Ovary (tissue), 10 donors: ENCODE measurements at regions of chr3 and their contacts with region 1.

Region 1: GRCh38 chr3:146334151-146334550 is 83.2 kb upstream of the PLSCR4 start:
- DNase-seq: peak; percentile 22 to 55 (median 44)
- H3K4me3 ChIP-seq: no peak overlapping the region
- H3K27ac ChIP-seq: no peak overlapping the region
- H3K4me1 ChIP-seq: no peaks in the 10 kb centered on the region
- H3K27me3 ChIP-seq: no peaks in the 10 kb centered on the region
- CTCF ChIP-seq: peak in 1 of 3 donors; percentile 9
- EP300 ChIP-seq: no peak
- POLR2A ChIP-seq: no peak

Region 2: GRCh38 chr3:146374146-146374545 is 40.0 kb after region 1 on chr3:
- intact Hi-C with region 1: no loop called
- DNase-seq: no peak
- H3K4me3 ChIP-seq: no peak overlapping the region
- H3K27ac ChIP-seq: peak overlapping the region in 1 of 2 donors; percentile 54
- H3K4me1 ChIP-seq: peaks cover 6% of the 10 kb centered on the region
- H3K27me3 ChIP-seq: no peaks in the 10 kb centered on the region
- CTCF ChIP-seq: no peak
- EP300 ChIP-seq: no peak
- POLR2A ChIP-seq: no peak

Region 3: DNA sequence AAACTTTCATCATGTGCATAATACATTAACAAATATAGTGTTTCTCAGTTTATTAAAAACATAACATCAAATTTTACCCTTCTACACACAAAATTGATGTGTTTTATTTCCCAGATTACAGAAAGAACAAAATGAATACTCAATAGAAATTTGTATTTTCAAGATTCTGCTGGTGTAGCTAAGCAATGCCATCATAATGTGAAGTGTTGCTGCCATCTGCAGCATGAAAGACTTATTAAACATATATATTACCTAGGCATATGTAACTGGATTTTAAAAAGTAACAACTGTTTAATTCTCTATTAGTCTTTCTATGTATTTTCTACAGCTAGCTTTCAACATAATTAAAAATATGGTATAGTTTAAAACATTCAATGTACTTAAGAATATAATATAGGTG is 243.5 kb after region 1 on chr3:
- intact Hi-C with region 1: loop called in 2 of 4 experiments (anchors 10 kb)
- DNase-seq: peak in 3 of 5 donors; percentile 14 to 58 (median 35)
- H3K4me3 ChIP-seq: no peak overlapping the region
- H3K27ac ChIP-seq: no peak overlapping the region
- H3K4me1 ChIP-seq: no peaks in the 10 kb centered on the region
- H3K27me3 ChIP-seq: no peaks in the 10 kb centered on the region
- CTCF ChIP-seq: peak in 2 of 3 donors; percentile 43 to 65
- EP300 ChIP-seq: no peak
- POLR2A ChIP-seq: no peak

Region 4: GRCh38 chr3:146589899-146590508 is 255.9 kb after region 1 on chr3:
- intact Hi-C with region 1: loop called in 1 of 4 experiments (anchors 10 kb)
- DNase-seq: peak in 2 of 5 donors; percentile 31
- H3K4me3 ChIP-seq: no peak overlapping the region
- H3K27ac ChIP-seq: no peak overlapping the region
- H3K4me1 ChIP-seq: no peaks in the 10 kb centered on the region
- H3K27me3 ChIP-seq: no peaks in the 10 kb centered on the region
- CTCF ChIP-seq: peak; percentile 22 to 38 (median 24)
- EP300 ChIP-seq: no peak
- POLR2A ChIP-seq: no peak